ENCODE measurements at regions of chrX and their contacts with region 1.

Region 1: GRCh38 chrX:44637282-44637681 is 94.6 kb upstream of the FUNDC1 start:
- DNase-seq: no peak
- ATAC-seq: no peak
- H3K4me3 ChIP-seq: no peak overlapping the region
- H3K27ac ChIP-seq: no peak overlapping the region
- H3K4me1 ChIP-seq: no peaks in the 10 kb centered on the region
- H3K27me3 ChIP-seq: no peaks in the 10 kb centered on the region
- CTCF ChIP-seq: no peak
- EP300 ChIP-seq: no peak
- POLR2A ChIP-seq: no peak
- RAD21 ChIP-seq: no peak

Region 2: GRCh38 chrX:44621078-44621477 is 16.2 kb before region 1 on chrX:
- CTCF ChIA-PET with region 1: no interaction called
- POLR2A ChIA-PET with region 1: no interaction called
- in situ Hi-C with region 1: no loop called
- intact Hi-C with region 1: no loop called
- DNase-seq: no peak
- ATAC-seq: no peak
- H3K4me3 ChIP-seq: no peak overlapping the region
- H3K27ac ChIP-seq: no peak overlapping the region
- H3K4me1 ChIP-seq: no peaks in the 10 kb centered on the region
- H3K27me3 ChIP-seq: no peaks in the 10 kb centered on the region
- CTCF ChIP-seq: no peak
- EP300 ChIP-seq: no peak
- POLR2A ChIP-seq: no peak
- RAD21 ChIP-seq: no peak

Region 3: DNA sequence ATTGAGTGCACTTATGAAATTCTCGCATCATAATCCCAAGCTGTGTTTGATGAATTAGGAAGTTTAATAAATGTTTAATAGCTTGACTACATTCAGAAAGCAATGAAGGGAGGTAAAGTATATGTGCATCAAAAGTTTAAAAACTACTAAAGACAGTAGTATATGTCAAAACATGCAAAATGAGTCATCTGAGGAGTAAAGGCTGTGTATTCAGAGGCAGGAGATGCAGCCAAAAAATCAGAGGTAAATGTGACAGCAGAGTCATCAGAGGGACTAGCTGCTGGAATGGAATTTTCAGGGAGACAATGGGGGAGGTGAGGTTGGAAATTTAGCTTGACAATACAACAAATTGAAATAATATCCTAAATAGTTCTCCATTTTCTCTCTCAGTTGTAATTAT is 32.3 kb after region 1 on chrX:
- CTCF ChIA-PET with region 1: no interaction called
- POLR2A ChIA-PET with region 1: no interaction called
- in situ Hi-C with region 1: no loop called
- intact Hi-C with region 1: loop called (anchors 2 kb)
- DNase-seq: no peak
- ATAC-seq: no peak
- H3K4me3 ChIP-seq: no peak overlapping the region
- H3K27ac ChIP-seq: no peak overlapping the region
- H3K4me1 ChIP-seq: no peaks in the 10 kb centered on the region
- H3K27me3 ChIP-seq: no peaks in the 10 kb centered on the region
- CTCF ChIP-seq: no peak
- EP300 ChIP-seq: no peak
- POLR2A ChIP-seq: no peak
- RAD21 ChIP-seq: no peak

Region 4: DNA sequence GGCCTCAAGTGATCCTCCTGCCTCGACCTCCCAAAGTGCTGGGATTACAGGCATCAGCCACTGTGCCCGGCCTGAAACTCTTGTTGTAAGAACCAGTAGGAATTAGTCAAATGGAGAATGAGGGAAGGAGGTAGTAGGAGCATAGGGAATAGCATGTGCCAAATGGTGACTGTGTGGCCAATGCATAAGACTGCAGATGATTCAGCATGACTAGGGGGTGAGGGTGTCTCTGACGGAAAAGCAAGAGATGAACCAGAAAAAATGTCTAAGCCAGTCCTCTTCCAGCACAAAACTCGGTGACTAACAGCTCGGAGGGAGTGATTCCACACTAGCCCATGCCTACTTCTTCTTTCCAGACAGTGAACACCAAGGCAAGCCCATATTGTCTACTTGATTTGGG is 148.4 kb after region 1 on chrX:
- CTCF ChIA-PET with region 1: no interaction called
- POLR2A ChIA-PET with region 1: no interaction called
- in situ Hi-C with region 1: no loop called
- intact Hi-C with region 1: no loop called
- DNase-seq: no peak
- ATAC-seq: no peak
- H3K4me3 ChIP-seq: no peak overlapping the region
- H3K27ac ChIP-seq: no peak overlapping the region
- H3K4me1 ChIP-seq: no peaks in the 10 kb centered on the region; a peak in 1 of 5 replicates
- H3K27me3 ChIP-seq: no peaks in the 10 kb centered on the region
- CTCF ChIP-seq: no peak
- EP300 ChIP-seq: no peak
- POLR2A ChIP-seq: no peak
- RAD21 ChIP-seq: no peak